Activated T-helper 2 cell treated with anti-CD3 and anti-CD28 coated beads, Interferon-gamma antibody, Interleukin-2, Interleukin-4, amounts not matched to agents 10 μg/mL and 5 μg/mL and 100 μg/mL, durations not matched to agents 14 hours and 24 hours and 36 hours (primary cell): ENCODE measurements at regions of chr5 and their contacts with region 1.

Region 1: DNA sequence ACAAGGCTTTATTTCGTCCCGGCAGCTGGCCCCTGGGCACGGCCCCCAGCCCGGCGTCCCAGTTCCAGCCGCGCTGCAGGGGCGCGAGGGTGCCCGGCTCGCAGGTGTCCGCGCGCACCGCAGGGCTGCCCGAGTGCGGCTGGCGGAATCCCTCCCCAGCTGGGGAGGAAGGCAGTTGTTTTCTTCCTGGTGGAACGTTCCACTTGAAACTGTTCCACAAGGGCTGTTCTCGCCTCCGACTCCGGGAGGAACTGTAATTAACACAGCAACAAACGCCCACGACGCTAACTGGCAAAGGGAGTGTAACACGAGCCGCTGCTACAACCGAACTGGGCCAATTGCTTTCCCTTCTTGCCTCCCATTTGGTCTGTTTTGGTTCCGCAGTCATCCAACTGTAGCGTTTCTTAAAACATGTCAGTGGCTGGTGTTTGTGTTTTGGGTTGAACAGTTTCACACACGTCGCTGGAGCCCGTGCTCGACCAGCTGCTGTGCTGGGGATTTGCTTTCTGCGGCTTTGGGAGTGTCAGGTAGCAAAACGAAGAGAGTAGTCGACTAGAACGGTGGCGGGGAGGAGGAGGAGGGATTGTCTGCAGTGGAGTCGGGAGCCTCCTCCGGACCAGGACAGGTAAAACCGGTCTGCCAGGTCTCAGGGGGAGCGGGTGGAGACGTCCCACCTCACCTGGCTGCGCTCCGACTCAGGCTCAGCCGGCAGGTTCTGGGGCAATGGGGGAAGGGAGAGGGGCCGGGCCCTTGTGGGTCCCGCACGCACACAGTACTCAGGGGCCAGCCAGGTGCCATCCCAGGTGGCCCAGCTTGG is 131.6 kb upstream of the NIPBL start:
- DNase-seq: no peak
- H3K4me3 Mint-ChIP-seq: peak overlapping the region; percentile 76
- H3K27ac Mint-ChIP-seq: no peak overlapping the region
- H3K4me1 Mint-ChIP-seq: peaks cover 13% of the 10 kb centered on the region
- H3K27me3 Mint-ChIP-seq: peaks cover 46% of the 10 kb centered on the region

Region 2: GRCh38 chr5:36870399-36871040 is 125.5 kb after region 1 on chr5:
- intact Hi-C with region 1: loop called (anchors 1 kb)
- DNase-seq: no peak
- H3K4me3 Mint-ChIP-seq: peak overlapping the region; percentile 10
- H3K27ac Mint-ChIP-seq: peak overlapping the region; percentile 22
- H3K4me1 Mint-ChIP-seq: peaks cover 29% of the 10 kb centered on the region
- H3K27me3 Mint-ChIP-seq: no peaks in the 10 kb centered on the region